B cell (primary cell): ENCODE measurements at regions of chr11 and their contacts with region 1.

Region 1: GRCh38 chr11:62427630-62428233 is 8.9 kb downstream of the SCGB1A1 start:
- DNase-seq: no peak
- ATAC-seq: no peak
- H3K4me3 ChIP-seq: no peak overlapping the region
- H3K4me3 Mint-ChIP-seq: no peak overlapping the region
- H3K27ac ChIP-seq: no peak overlapping the region
- H3K27ac Mint-ChIP-seq: peak overlapping the region; percentile 12
- H3K4me1 ChIP-seq: peaks cover 4 to 13% of the 10 kb centered on the region in 2 donors
- H3K4me1 Mint-ChIP-seq: peaks cover 16% of the 10 kb centered on the region
- H3K27me3 ChIP-seq: peaks cover 0 to 2% (median 0%) of the 10 kb centered on the region in 4 experiments
- H3K27me3 Mint-ChIP-seq: peaks cover 10% of the 10 kb centered on the region
- CTCF ChIP-seq: no peak

Region 2: DNA sequence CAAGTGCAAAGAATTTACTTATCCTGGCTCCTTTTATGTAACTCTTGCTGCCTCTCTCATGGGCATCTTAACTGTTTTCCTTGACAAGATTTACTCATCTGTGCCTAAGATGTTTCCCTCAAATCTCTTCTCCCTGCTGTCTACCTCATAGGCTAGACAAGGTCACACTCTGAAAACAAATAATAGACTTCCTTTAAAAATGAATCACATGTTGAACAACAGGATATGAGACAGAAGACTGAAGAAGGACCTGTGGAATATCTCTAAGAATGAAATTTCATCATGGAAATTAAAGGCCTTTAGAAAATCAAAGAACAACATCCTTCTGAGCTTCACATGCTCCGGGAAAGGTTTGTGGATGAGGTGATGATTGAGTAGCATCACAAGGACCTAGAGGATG is 163.7 kb before region 1 on chr11:
- CTCF ChIA-PET with region 1: no interaction called
- POLR2A ChIA-PET with region 1: no interaction called
- intact Hi-C with region 1: no loop called
- DNase-seq: no peak
- ATAC-seq: no peak
- H3K4me3 ChIP-seq: no peak overlapping the region
- H3K4me3 Mint-ChIP-seq: no peak overlapping the region
- H3K27ac ChIP-seq: no peak overlapping the region
- H3K27ac Mint-ChIP-seq: no peak overlapping the region
- H3K4me1 ChIP-seq: no peaks in the 10 kb centered on the region
- H3K4me1 Mint-ChIP-seq: no peaks in the 10 kb centered on the region
- H3K27me3 ChIP-seq: peaks cover 0 to 22% (median 0%) of the 10 kb centered on the region in 4 experiments
- H3K27me3 Mint-ChIP-seq: peaks cover 42% of the 10 kb centered on the region
- CTCF ChIP-seq: no peak

Region 3: GRCh38 chr11:62444236-62444833 is 16.6 kb after region 1 on chr11:
- CTCF ChIA-PET with region 1: interaction called, 44 read pairs
- POLR2A ChIA-PET with region 1: no interaction called
- intact Hi-C with region 1: loop called (anchors 2 kb)
- DNase-seq: peak; percentile 85
- ATAC-seq: peak; percentile 88
- H3K4me3 ChIP-seq: peak overlapping the region in 4 of 5 experiments; percentile 30 to 66 (median 60)
- H3K4me3 Mint-ChIP-seq: peak overlapping the region; percentile 94
- H3K27ac ChIP-seq: peak overlapping the region; percentile 81 to 85
- H3K27ac Mint-ChIP-seq: peak overlapping the region; percentile 98
- H3K4me1 ChIP-seq: peaks cover 24 to 29% of the 10 kb centered on the region in 2 donors
- H3K4me1 Mint-ChIP-seq: peaks cover 29% of the 10 kb centered on the region
- H3K27me3 ChIP-seq: peaks cover 0 to 5% (median 0%) of the 10 kb centered on the region in 4 experiments
- H3K27me3 Mint-ChIP-seq: peaks cover 5% of the 10 kb centered on the region
- CTCF ChIP-seq: no peak

Region 4: GRCh38 chr11:62461740-62462507 is 34.2 kb after region 1 on chr11:
- CTCF ChIA-PET with region 1: interaction called, 12 read pairs
- POLR2A ChIA-PET with region 1: no interaction called
- intact Hi-C with region 1: no loop called
- DNase-seq: no peak
- ATAC-seq: no peak
- H3K4me3 ChIP-seq: no peak overlapping the region
- H3K4me3 Mint-ChIP-seq: no peak overlapping the region
- H3K27ac ChIP-seq: no peak overlapping the region
- H3K27ac Mint-ChIP-seq: no peak overlapping the region
- H3K4me1 ChIP-seq: peaks cover 0 to 8% of the 10 kb centered on the region in 2 donors
- H3K4me1 Mint-ChIP-seq: peaks cover 17% of the 10 kb centered on the region
- H3K27me3 ChIP-seq: no peaks in the 10 kb centered on the region
- H3K27me3 Mint-ChIP-seq: no peaks in the 10 kb centered on the region
- CTCF ChIP-seq: no peak

Region 5: DNA sequence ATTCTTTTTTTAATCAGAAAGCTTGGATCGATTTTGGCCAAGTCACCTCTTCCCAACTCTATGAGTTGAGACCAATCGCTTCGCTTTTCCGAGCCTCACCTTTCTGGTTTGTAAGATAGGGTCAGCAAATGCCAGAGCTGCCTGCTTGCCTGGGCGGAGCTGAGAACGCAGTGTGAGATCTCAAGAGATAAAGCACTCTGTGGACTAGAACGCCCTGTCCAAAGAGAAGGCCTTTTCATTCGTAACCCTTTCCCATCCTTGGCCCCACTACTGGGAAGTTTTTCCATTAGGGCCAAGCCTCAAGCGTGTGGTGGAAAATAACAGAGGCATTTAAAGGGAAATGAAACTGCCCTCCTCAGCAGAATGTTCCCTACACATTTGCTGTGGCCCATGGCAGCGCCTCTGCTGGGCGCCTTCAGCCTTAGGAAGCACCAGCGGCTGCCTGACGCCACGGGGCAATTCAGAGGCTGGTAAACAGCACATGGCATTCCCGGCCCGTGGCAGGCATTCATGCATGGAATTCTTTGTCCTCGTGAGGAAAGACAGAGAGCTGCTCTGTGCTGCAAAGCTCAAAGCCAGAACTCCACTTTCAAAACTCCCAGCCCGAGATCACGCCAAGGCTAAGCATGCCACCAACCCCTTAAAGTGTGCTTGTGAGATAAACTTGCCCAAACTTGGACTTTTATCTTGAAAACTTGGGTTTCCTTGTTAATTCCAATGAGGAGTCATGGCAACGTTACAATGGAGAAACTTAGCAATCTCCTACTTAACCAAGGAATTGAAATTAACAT is 80.7 kb after region 1 on chr11:
- CTCF ChIA-PET with region 1: interaction called, 11 read pairs
- POLR2A ChIA-PET with region 1: no interaction called
- intact Hi-C with region 1: no loop called
- DNase-seq: peak; percentile 70
- ATAC-seq: peak; percentile 66
- H3K4me3 ChIP-seq: no peak overlapping the region
- H3K4me3 Mint-ChIP-seq: no peak overlapping the region
- H3K27ac ChIP-seq: no peak overlapping the region
- H3K27ac Mint-ChIP-seq: peak overlapping the region; percentile 26
- H3K4me1 ChIP-seq: peaks cover 4 to 11% of the 10 kb centered on the region in 2 donors
- H3K4me1 Mint-ChIP-seq: peaks cover 12% of the 10 kb centered on the region
- H3K27me3 ChIP-seq: peaks cover 0 to 4% (median 0%) of the 10 kb centered on the region in 4 experiments
- H3K27me3 Mint-ChIP-seq: peaks cover 5% of the 10 kb centered on the region
- CTCF ChIP-seq: peak; percentile 29

Region 6: DNA sequence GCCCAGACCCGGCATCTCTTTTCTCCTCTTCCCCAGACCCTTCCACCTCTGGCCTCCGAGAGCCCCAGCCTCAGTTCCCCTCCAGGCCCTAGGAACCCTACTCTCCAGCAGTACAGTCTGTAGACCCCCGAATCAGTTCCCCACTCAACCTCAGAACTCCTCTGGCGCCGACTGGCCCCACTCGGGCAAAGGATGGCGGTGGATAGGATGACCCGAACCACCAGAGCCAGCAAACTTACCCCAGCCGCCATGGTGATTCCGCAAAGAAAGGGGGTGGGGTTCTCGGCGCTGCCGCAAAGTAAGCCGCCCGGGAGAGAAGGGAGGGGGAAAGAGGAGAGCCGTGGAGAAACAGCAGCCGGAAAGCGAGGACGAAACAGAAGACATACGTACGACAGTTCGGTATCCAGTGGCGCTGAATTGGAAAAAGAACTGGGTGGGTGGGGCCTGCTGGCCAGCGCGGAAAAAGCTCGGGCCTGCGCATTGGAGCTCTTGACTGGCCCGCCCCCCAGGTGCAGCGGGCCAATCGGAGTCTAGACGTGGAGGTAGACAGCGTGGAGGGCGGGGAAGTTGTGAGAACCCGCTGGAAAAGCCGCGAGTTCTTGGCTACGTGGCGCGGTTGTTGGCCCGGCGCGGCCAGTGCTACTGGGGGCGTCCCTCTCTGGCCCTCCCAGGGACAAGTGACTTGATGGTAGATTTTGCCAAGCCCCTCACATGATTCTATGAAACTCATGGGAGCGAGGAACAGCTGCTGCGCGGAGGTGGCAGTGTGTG is 146.0 kb after region 1 on chr11 and contains the start of gene EEF1G:
- CTCF ChIA-PET with region 1: interaction called, 13 read pairs
- POLR2A ChIA-PET with region 1: no interaction called
- intact Hi-C with region 1: no loop called
- DNase-seq: peak; percentile 99
- ATAC-seq: peak; percentile 93
- H3K4me3 ChIP-seq: peak within 1 kb of the TSS; percentile 74 to 99 (median 80)
- H3K4me3 Mint-ChIP-seq: peak within 1 kb of the TSS; percentile 92
- H3K27ac ChIP-seq: peak within 1 kb of the TSS; percentile 84 to 88
- H3K27ac Mint-ChIP-seq: peak within 1 kb of the TSS; percentile 95
- H3K4me1 ChIP-seq: peaks cover 12 to 25% of the 10 kb centered on the region in 2 donors
- H3K4me1 Mint-ChIP-seq: peaks cover 50% of the 10 kb centered on the region
- H3K27me3 ChIP-seq: no peaks in the 10 kb centered on the region
- H3K27me3 Mint-ChIP-seq: no peaks in the 10 kb centered on the region
- CTCF ChIP-seq: no peak
- total RNA-seq, gene EEF1G: 1,778 and 1,867 TPM in 2 replicates